Panc1 (cell line): ENCODE measurements at regions of chr18 and their contacts with region 1.

Region 1: DNA sequence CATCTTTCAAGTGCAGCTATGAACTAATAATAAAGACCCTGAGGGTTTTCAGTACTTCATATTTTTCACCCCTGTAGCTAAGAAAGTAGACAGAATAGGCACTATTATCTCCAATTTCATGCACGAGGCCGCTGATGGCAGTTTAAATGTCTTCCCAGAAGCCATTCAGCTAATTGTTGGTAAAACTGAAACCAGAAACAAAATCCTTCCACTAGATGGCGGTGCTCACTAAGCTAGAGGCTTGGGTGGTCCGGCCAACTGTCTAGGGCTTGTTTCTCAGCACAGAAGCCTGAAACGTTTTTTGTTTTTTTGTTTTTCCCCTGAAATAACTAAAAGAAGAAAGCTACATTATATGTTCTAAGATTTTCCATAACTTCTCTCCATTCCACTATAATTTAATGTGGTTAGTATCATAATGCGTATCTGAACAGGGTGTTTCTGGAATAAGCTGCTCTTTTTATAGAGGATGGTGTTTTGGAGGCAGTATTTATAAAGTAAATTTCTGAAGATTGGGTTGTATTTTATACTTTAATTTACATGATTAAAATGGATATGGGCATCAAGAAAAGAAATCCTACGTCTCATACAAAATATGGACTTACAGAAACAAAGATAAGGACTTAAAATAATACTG is 159.4 kb downstream of the PIK3C3 start:
- DNase-seq: peak; percentile 28
- ATAC-seq: peak; percentile 78
- H3K4me3 ChIP-seq: no peak overlapping the region
- H3K27ac ChIP-seq: no peak overlapping the region; the same call in 1 of the 2 replicates
- H3K4me1 ChIP-seq: no peaks in the 10 kb centered on the region; the same call in 1 of the 2 replicates
- H3K27me3 ChIP-seq: no peaks in the 10 kb centered on the region
- CTCF ChIP-seq: peak; percentile 76

Region 2: DNA sequence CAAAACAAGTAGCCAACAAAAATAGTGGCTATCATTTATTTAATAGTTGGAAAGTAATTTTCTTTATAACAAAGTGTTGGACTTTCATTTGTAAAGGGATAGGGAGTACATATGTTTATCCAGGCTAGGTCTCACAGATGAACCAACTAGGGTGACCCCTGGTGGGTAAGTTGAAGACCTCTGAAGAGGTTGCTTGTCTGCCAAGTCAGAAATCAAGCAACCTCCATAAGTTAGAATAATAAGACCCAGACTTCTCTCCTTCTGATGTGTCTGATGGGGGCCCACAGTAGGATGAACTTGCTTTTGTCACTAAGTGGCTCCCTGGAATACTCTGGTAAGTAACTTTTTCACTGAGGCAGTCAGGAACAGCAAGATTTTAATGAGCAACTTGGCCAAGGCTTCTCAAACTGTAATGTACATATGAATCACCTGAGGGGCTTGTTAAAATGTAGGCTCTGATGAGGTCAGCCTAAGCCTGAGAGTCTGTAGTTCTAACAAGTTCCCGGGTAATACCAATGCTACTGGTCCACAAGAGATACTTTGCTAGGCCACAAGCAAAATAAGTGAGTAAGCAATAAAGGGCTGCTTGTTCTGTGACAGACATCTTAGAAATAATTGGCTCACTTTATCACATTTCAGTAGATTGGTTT is 160.2 kb after region 1 on chr18:
- CTCF ChIA-PET with region 1: no interaction called
- POLR2A ChIA-PET with region 1: no interaction called
- in situ Hi-C with region 1: no loop called
- intact Hi-C with region 1: loop called (anchors 5 kb)
- DNase-seq: no peak
- ATAC-seq: no peak
- H3K4me3 ChIP-seq: no peak overlapping the region
- H3K27ac ChIP-seq: no peak overlapping the region
- H3K4me1 ChIP-seq: no peaks in the 10 kb centered on the region
- H3K27me3 ChIP-seq: no peaks in the 10 kb centered on the region
- CTCF ChIP-seq: no peak

Region 3: DNA sequence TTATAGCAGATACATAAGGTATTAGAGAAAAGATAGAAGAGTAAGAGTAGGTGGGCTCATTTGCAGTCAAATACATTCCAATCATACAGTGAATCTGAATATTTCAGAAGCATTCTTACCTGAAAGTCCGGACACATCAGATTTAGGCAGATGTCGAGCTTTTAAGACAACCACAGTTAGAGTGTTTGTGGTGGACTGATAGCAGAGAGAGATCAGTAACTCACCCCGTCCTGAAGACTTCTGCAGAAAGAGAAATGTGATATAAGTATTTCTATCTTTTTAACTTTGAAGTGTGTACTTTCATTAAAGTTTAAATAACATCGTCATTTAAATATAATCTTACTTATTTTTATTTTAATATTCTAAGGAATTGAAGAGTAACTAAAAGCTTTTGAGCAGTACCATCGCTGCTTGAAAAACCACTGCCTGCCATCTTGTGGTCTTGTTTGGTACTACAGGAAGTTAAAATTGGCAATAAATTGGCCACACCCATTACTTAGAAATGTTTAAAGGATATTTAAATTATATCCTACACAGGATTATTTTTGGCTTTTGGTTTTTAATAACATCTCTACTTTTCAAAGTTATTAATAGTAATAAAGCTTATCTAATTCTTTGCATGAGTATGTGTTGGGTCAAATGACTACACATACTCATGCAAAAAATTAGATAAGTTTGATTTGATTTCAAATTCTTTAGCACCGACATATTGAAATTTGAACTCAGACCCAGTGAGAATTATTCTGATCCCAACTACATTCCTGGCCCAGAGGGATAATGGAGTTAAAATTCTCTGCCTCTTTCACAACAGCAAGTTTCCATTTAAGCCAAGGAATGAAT is 1157.4 kb after region 1 on chr18:
- CTCF ChIA-PET with region 1: no interaction called
- POLR2A ChIA-PET with region 1: no interaction called
- in situ Hi-C with region 1: no loop called
- intact Hi-C with region 1: loop called (anchors 10 kb)
- DNase-seq: peak; percentile 32
- ATAC-seq: no peak
- H3K4me3 ChIP-seq: no peak overlapping the region
- H3K27ac ChIP-seq: no peak overlapping the region
- H3K4me1 ChIP-seq: no peaks in the 10 kb centered on the region
- H3K27me3 ChIP-seq: no peaks in the 10 kb centered on the region
- CTCF ChIP-seq: peak; percentile 53; the same call in 1 of the 2 replicates